ENCODE measurements at regions of chr2 and their contacts with region 1.

Region 1: GRCh38 chr2:218286570-218287459 is 5.5 kb downstream of the TMBIM1 start:
- DNase-seq: peak; percentile 46 to 77
- H3K4me3 ChIP-seq: no peak overlapping the region
- H3K27ac ChIP-seq: no peak overlapping the region
- H3K4me1 ChIP-seq: peaks cover 5 to 11% (median 7%) of the 10 kb centered on the region in 4 experiments; a peak in 4 of 7 replicates
- H3K27me3 ChIP-seq: no peaks in the 10 kb centered on the region
- CTCF ChIP-seq: no peak
- EP300 ChIP-seq: no peak
- POLR2A ChIP-seq: no peak
- RAD21 ChIP-seq: no peak

Region 2: DNA sequence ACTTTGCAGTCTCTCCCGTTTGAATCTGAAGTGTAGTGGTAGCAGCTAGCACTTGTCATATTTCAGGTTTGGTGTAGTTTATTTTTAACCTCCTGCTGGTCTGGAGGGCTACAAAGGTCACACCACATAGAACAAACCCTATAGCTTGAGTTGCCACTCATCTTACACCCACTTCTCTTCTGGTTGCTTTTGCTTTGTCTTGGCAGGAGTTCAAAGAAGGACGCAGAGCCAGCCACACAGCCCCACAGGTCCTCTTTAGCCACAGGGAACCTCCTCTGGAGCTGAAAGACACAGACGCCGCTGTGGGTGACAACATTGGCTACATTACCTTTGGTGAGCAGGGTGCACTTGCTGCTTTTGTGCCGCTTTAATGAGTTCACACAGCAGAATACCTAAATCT is 41.6 kb before region 1 on chr2:
- CTCF ChIA-PET with region 1: no interaction called
- POLR2A ChIA-PET with region 1: no interaction called
- DNase-seq: no peak
- H3K4me3 ChIP-seq: no peak overlapping the region
- H3K27ac ChIP-seq: no peak overlapping the region
- H3K4me1 ChIP-seq: no peaks in the 10 kb centered on the region
- H3K27me3 ChIP-seq: no peaks in the 10 kb centered on the region
- CTCF ChIP-seq: no peak
- EP300 ChIP-seq: no peak
- POLR2A ChIP-seq: no peak
- RAD21 ChIP-seq: no peak

Region 3: GRCh38 chr2:218275371-218276072 is 11.3 kb before region 1 on chr2:
- CTCF ChIA-PET with region 1: interaction called, 131 read pairs
- POLR2A ChIA-PET with region 1: interaction called, 22 read pairs
- DNase-seq: no peak
- H3K4me3 ChIP-seq: no peak overlapping the region
- H3K27ac ChIP-seq: no peak overlapping the region
- H3K4me1 ChIP-seq: peaks cover 0 to 4% (median 2%) of the 10 kb centered on the region in 4 experiments; a peak in 4 of 7 replicates
- H3K27me3 ChIP-seq: no peaks in the 10 kb centered on the region
- CTCF ChIP-seq: no peak
- EP300 ChIP-seq: no peak
- POLR2A ChIP-seq: no peak
- RAD21 ChIP-seq: no peak